ENCODE measurements at regions of chr12 and their contacts with region 1.

Region 1: DNA sequence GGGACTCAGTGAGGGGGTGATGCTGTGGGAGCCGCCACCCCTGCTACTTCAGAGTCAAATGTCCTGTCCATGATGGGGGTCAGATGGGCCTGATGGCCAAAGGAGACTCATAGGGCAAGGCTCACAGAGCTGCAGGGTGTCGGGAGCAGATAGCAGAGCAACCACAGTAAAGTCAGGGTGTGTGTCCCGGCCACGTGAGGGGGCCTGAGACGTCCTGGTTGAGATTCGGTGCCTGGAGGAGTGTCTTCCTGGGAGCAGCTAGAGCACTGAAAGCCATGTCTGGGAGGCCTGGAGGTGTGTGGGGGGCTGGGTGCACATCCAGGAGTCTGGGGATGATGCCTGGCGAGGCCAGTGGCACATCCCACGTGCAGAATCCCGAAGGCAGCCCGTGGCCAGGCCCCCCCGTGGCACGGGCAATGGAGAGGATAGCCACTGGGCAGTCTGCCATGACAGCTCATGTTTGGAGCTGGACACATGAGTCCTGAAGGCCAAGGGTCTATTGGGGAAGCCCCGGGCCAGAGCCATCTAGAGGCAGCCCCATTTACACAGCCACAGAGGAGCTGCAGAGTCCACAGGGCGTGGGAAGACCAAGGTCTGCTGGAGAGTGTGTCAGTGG is 308.0 kb upstream of the SFSWAP start:
- DNase-seq: no peak
- H3K4me3 ChIP-seq: no peak overlapping the region
- H3K27ac ChIP-seq: no peak overlapping the region
- H3K4me1 ChIP-seq: no peaks in the 10 kb centered on the region
- H3K27me3 ChIP-seq: peaks cover 13% of the 10 kb centered on the region; the same call in 1 of the 2 replicates
- CTCF ChIP-seq: no peak

Region 2: GRCh38 chr12:131266591-131267467 is 136.1 kb before region 1 on chr12:
- CTCF ChIA-PET with region 1: no interaction called
- POLR2A ChIA-PET with region 1: no interaction called
- intact Hi-C with region 1: loop called (anchors 2 kb)
- DNase-seq: no peak
- H3K4me3 ChIP-seq: no peak overlapping the region
- H3K27ac ChIP-seq: no peak overlapping the region
- H3K4me1 ChIP-seq: no peaks in the 10 kb centered on the region
- H3K27me3 ChIP-seq: peaks cover 52% of the 10 kb centered on the region
- CTCF ChIP-seq: no peak

Region 3: GRCh38 chr12:131773582-131774221 is 370.8 kb after region 1 on chr12:
- CTCF ChIA-PET with region 1: no interaction called
- POLR2A ChIA-PET with region 1: no interaction called
- intact Hi-C with region 1: no loop called
- DNase-seq: no peak
- H3K4me3 ChIP-seq: no peak overlapping the region
- H3K27ac ChIP-seq: no peak overlapping the region
- H3K4me1 ChIP-seq: no peaks in the 10 kb centered on the region
- H3K27me3 ChIP-seq: no peaks in the 10 kb centered on the region
- CTCF ChIP-seq: no peak